Activated B cell treated with CpG ODN at 0.5 μM for 24 hours (primary cell): ENCODE measurements at regions of chr15 and their contacts with region 1.

Region 1: GRCh38 chr15:82197733-82198594 is 64.6 kb downstream of the EFL1 start:
- DNase-seq: peak; percentile 18
- ATAC-seq: peak; percentile 83
- H3K4me3 Mint-ChIP-seq: no peak overlapping the region
- H3K27ac Mint-ChIP-seq: no peak overlapping the region
- H3K4me1 Mint-ChIP-seq: peaks cover 9% of the 10 kb centered on the region
- H3K27me3 Mint-ChIP-seq: no peaks in the 10 kb centered on the region
- CTCF ChIP-seq: peak; percentile 37

Region 2: GRCh38 chr15:81410318-81410753 is 787.6 kb before region 1 on chr15:
- CTCF ChIA-PET with region 1: no interaction called
- POLR2A ChIA-PET with region 1: no interaction called
- intact Hi-C with region 1: loop called (anchors 2 kb)
- DNase-seq: no peak
- ATAC-seq: no peak
- H3K4me3 Mint-ChIP-seq: no peak overlapping the region
- H3K27ac Mint-ChIP-seq: no peak overlapping the region
- H3K4me1 Mint-ChIP-seq: no peaks in the 10 kb centered on the region
- H3K27me3 Mint-ChIP-seq: peaks cover 31% of the 10 kb centered on the region
- CTCF ChIP-seq: no peak

Region 3: GRCh38 chr15:81749716-81750375 is 448.1 kb before region 1 on chr15:
- CTCF ChIA-PET with region 1: no interaction called
- POLR2A ChIA-PET with region 1: no interaction called
- intact Hi-C with region 1: no loop called
- DNase-seq: no peak
- ATAC-seq: no peak
- H3K4me3 Mint-ChIP-seq: no peak overlapping the region
- H3K27ac Mint-ChIP-seq: no peak overlapping the region
- H3K4me1 Mint-ChIP-seq: no peaks in the 10 kb centered on the region
- H3K27me3 Mint-ChIP-seq: no peaks in the 10 kb centered on the region
- CTCF ChIP-seq: no peak

Region 4: GRCh38 chr15:82108489-82109078 is 89.4 kb before region 1 on chr15:
- CTCF ChIA-PET with region 1: interaction called, 7 read pairs
- POLR2A ChIA-PET with region 1: no interaction called
- intact Hi-C with region 1: loop called (anchors 1 kb)
- DNase-seq: peak; percentile 63
- ATAC-seq: peak; percentile 96
- H3K4me3 Mint-ChIP-seq: no peak overlapping the region
- H3K27ac Mint-ChIP-seq: no peak overlapping the region
- H3K4me1 Mint-ChIP-seq: no peaks in the 10 kb centered on the region
- H3K27me3 Mint-ChIP-seq: no peaks in the 10 kb centered on the region
- CTCF ChIP-seq: no peak